Activated CD4-positive, alpha-beta memory T cell treated with anti-CD3 and anti-CD28 coated beads, Interleukin-2, amount 10 ng/mL, durations not matched to agents 7 days and 5 days (primary cell): ENCODE measurements at regions of chr16 and their contacts with region 1.

Region 1: DNA sequence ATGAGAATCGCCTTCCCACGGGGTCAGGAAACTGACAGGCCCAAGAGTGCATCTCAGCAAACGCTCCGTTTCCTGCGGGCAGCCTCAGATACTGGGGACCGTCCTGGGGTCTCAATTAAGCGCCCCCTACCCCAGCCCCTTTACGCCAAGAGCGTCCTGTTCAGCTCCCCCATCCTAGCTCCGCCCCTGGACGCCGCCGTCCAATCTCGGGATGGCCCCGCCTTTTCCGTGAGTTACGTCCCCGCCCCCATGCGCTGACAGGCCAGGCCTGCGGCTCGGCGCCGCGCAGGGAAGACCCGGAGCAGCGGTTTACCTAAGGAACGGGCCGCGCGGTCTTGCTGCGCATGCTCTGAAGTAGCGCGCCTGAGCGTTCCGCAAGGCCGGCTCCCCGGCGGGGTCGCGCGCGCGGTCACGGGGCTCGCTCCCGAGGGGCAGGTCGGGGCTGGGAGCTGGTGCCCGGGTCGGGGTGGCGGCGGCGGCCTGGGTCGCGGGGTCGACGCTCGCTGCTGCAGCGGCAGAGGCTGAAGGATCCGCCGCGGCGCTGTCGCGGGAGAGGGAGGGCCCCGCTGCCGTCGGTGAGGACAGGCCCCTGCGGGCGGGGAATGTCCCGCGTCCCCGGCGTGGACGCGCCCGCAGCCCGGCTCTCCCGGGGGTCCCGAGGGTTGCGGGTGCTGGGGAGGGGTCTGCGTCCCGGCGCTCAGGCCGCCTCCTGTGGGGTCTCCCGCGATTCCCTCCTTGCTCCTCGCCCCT is at the start of gene FLYWCH1:
- DNase-seq: peak; percentile 99
- H3K4me3 Mint-ChIP-seq: peak within 1 kb of the TSS; percentile 96
- H3K27ac Mint-ChIP-seq: peak within 1 kb of the TSS; percentile 88
- H3K4me1 Mint-ChIP-seq: peaks cover 52% of the 10 kb centered on the region
- H3K27me3 Mint-ChIP-seq: peaks cover 6% of the 10 kb centered on the region
- total RNA-seq, gene FLYWCH1: 75.2 to 80.8 TPM

Region 2: GRCh38 chr16:2838928-2839327 is 72.8 kb before region 1 on chr16:
- CTCF ChIA-PET with region 1: interaction called, 10 read pairs
- POLR2A ChIA-PET with region 1: no interaction called
- DNase-seq: peak; percentile 65
- H3K4me3 Mint-ChIP-seq: no peak overlapping the region
- H3K27ac Mint-ChIP-seq: no peak overlapping the region
- H3K4me1 Mint-ChIP-seq: peaks cover 36% of the 10 kb centered on the region
- H3K27me3 Mint-ChIP-seq: peaks cover 2% of the 10 kb centered on the region

Region 3: GRCh38 chr16:2926650-2927646 is 15.2 kb after region 1 on chr16:
- CTCF ChIA-PET with region 1: interaction called, 31 read pairs
- POLR2A ChIA-PET with region 1: interaction called, 6 read pairs
- DNase-seq: peak; percentile 90
- H3K4me3 Mint-ChIP-seq: no peak overlapping the region
- H3K27ac Mint-ChIP-seq: no peak overlapping the region
- H3K4me1 Mint-ChIP-seq: peaks cover 17% of the 10 kb centered on the region
- H3K27me3 Mint-ChIP-seq: no peaks in the 10 kb centered on the region